Tibial artery (tissue), 4 donors: ENCODE measurements at regions of chr19 and their contacts with region 1.

Region 1: GRCh38 chr19:36489118-36489919 is at the start of gene ZNF566:
- DNase-seq: peak; percentile 90 to 93
- H3K4me3 ChIP-seq: peak within 1 kb of the TSS; percentile 62 to 65
- H3K27ac ChIP-seq: peak within 1 kb of the TSS; percentile 90 to 92
- H3K4me1 ChIP-seq: peaks cover 0 to 17% (median 8%) of the 10 kb centered on the region in 4 donors
- H3K27me3 ChIP-seq: no peaks in the 10 kb centered on the region
- CTCF ChIP-seq: no peak

Region 2: DNA sequence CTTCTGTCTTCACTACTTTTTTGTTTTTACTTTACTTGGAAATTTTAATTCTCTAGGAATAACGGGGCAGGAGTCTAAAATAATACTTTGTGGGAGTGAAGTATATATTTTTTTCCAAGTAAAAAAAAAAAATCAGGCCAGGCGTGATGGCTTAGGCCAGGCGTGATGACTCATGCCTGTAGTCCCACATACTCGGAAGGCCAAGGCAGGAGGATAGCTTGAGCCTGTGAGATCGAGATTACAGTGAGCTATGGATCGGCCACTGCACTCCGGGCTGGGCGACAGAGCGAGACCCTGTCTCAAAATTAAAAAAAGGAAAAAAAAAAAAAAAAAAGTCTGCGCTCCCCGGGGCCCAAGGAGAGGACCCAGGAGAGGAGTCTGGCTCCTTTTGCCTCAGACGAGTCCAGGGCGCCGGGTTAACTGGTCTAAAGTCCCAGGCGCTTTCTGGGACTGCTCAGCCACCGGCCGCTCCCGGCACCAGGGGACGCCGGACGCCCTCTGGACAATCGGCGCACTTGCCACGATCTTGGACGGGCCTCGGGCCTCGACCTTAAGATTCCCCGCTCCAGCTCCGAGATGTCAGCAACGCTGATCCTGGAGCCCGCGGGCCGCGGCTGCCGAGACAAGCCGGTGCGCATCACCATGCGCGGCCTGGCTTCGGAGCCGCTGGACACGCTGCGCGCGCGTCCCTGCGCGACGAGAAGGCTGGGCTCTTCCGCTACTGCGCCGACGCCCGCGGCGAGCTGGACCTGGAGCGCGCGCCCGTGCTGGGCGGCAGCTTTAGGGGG is 68.2 kb before region 1 on chr19:
- intact Hi-C with region 1: loop called (anchors 10 kb)
- DNase-seq: peak in 1 of 2 donors; percentile 64
- H3K4me3 ChIP-seq: peak overlapping the region; percentile 55 to 66
- H3K27ac ChIP-seq: peak overlapping the region; percentile 73 to 75
- H3K4me1 ChIP-seq: peaks cover 0 to 19% (median 15%) of the 10 kb centered on the region in 4 donors
- H3K27me3 ChIP-seq: no peaks in the 10 kb centered on the region
- CTCF ChIP-seq: no peak

Region 3: GRCh38 chr19:36456831-36457230 is 32.5 kb before region 1 on chr19:
- intact Hi-C with region 1: no loop called
- DNase-seq: no peak
- H3K4me3 ChIP-seq: no peak overlapping the region
- H3K27ac ChIP-seq: no peak overlapping the region
- H3K4me1 ChIP-seq: no peaks in the 10 kb centered on the region
- H3K27me3 ChIP-seq: no peaks in the 10 kb centered on the region
- CTCF ChIP-seq: no peak